GM10248 (cell line): ENCODE measurements at regions of chr20 and their contacts with region 1.

Region 1: DNA sequence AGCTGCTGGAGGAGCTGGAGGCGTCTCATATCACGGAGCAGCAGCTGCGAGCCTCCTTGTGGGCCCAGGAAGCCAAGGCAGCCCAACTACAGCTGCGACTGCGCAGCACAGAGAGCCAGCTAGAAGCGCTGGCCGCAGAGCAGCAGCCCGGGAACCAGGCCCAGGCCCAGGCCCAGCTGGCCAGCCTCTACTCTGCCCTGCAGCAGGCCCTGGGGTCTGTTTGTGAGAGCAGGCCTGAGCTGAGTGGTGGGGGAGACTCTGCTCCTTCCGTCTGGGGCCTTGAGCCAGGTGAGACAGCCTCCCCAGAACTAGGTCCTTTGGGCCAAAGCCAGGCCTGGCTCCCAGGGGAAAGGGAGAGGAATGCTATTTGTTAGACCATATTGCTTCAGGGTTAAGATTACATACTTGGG is 31.7 kb downstream of the C20orf173 start:
- DNase-seq: no peak
- CTCF ChIP-seq: no peak

Region 2: GRCh38 chr20:35510951-35511735 is 13.4 kb after region 1 on chr20:
- CTCF ChIA-PET with region 1: interaction called, 11 read pairs
- POLR2A ChIA-PET with region 1: no interaction called
- DNase-seq: no peak
- CTCF ChIP-seq: no peak

Region 3: GRCh38 chr20:35967979-35968640 is 470.3 kb after region 1 on chr20 and contains the start of gene CNBD2:
- CTCF ChIA-PET with region 1: no interaction called
- POLR2A ChIA-PET with region 1: no interaction called
- DNase-seq: no peak
- CTCF ChIP-seq: no peak